ENCODE measurements at regions of chr20 and their contacts with region 1.

Region 1: DNA sequence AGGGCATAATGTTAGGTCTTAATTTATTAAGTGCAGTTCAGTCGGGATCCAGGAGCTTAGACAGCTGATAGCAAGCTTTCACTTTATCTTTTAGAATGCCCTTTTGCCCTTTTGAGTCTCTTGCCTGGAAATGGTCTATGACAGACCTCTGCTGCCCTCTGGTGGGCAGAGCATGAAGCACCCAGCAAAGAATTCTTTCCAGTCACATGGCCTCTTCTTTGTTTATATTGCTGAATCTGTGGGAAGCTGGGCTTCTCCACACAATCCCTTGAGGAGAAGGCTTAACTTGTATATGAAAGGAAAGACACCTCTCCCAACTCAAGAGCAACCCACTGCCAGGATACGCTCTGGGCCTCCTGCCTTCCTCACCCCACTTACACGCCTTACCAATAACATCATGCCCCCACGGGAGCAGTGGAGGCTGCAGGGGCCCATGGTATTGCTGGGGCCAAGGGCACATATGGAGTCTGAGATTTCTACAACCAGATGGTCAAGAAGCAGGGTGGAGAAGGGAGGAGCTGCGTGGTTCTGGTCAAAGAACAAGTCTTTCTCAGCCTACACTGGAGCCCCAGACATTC is 20.4 kb downstream of the WFDC3 start:
- DNase-seq: peak; percentile 80 to 91
- H3K4me3 ChIP-seq: no peak overlapping the region
- H3K27ac ChIP-seq: no peak overlapping the region
- H3K4me1 ChIP-seq: peaks cover 2 to 7% (median 5%) of the 10 kb centered on the region in 4 experiments
- H3K27me3 ChIP-seq: no peaks in the 10 kb centered on the region
- CTCF ChIP-seq: peak; percentile 61 to 94 (median 93)
- EP300 ChIP-seq: no peak
- POLR2A ChIP-seq: no peak
- RAD21 ChIP-seq: peak; percentile 99

Region 2: DNA sequence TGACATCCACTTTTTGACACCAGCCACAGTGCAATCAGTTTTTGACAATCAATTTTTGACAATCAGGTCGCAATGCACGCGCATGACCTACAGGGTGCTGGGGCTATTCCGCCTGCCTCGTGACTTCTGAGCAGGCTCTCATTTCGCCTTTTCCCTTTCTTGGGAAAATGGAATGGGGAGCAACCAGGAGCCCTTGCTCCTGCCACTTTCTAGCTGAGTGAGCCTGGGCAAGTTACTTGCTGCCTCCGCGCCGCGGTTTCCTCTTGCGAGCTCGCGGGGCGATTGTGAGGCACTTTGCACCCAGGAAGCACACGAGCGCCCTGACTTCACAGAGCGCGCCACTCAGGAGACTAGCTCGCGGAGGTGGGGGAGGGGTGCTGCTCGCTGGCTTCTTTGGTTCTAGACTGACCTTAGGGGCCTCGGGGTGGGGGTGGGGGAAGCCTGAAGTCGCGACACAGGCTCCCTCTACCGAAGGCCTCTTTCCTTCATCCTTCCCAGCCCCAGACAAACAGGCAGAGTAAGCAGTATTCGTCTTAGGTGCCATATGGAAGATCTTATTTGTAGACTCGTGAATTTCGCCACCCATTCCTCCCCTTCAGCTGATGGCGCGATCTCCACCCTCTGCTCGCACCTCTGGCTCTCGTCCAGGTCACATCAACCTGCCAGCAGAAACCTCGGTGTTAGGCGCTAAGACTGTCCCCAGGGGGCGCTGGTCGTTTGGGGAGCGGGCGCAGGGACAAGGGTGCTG is 397.7 kb before region 1 on chr20:
- CTCF ChIA-PET with region 1: interaction called, 18 read pairs
- POLR2A ChIA-PET with region 1: no interaction called
- DNase-seq: peak; percentile 70 to 96
- H3K4me3 ChIP-seq: peak overlapping the region; percentile 27 to 63 (median 45); a peak in 7 of 8 replicates
- H3K27ac ChIP-seq: no peak overlapping the region
- H3K4me1 ChIP-seq: peaks cover 0 to 16% (median 9%) of the 10 kb centered on the region in 4 experiments; a peak in 6 of 7 replicates
- H3K27me3 ChIP-seq: peaks cover 0 to 12% (median 9%) of the 10 kb centered on the region in 4 experiments; a peak in 3 of 7 replicates
- CTCF ChIP-seq: peak; percentile 88 to 96 (median 92)
- EP300 ChIP-seq: no peak
- POLR2A ChIP-seq: no peak
- RAD21 ChIP-seq: peak; percentile 77 to 85

Region 3: GRCh38 chr20:45470262-45470931 is 300.9 kb before region 1 on chr20:
- CTCF ChIA-PET with region 1: interaction called, 10 read pairs
- POLR2A ChIA-PET with region 1: interaction called, 3 read pairs
- DNase-seq: peak in 1 of 2 experiments; percentile 87
- H3K4me3 ChIP-seq: peak overlapping the region; percentile 63 to 77 (median 70)
- H3K27ac ChIP-seq: peak overlapping the region; percentile 36; the same call in 1 of the 2 replicates
- H3K4me1 ChIP-seq: peaks cover 2 to 20% (median 7%) of the 10 kb centered on the region in 4 experiments
- H3K27me3 ChIP-seq: peaks cover 0 to 4% (median 1%) of the 10 kb centered on the region in 4 experiments; a peak in 3 of 7 replicates
- CTCF ChIP-seq: no peak
- EP300 ChIP-seq: no peak
- POLR2A ChIP-seq: peak in 1 of 2 experiments; percentile 67; a peak in 1 of 3 replicates
- RAD21 ChIP-seq: no peak

Region 4: GRCh38 chr20:45545754-45546453 is 225.4 kb before region 1 on chr20:
- CTCF ChIA-PET with region 1: interaction called, 73 read pairs
- POLR2A ChIA-PET with region 1: interaction called, 8 read pairs
- DNase-seq: peak in 1 of 2 experiments; percentile 47
- H3K4me3 ChIP-seq: no peak overlapping the region
- H3K27ac ChIP-seq: no peak overlapping the region
- H3K4me1 ChIP-seq: peaks cover 0 to 5% (median 0%) of the 10 kb centered on the region in 4 experiments; a peak in 1 of 7 replicates
- H3K27me3 ChIP-seq: no peaks in the 10 kb centered on the region
- CTCF ChIP-seq: peak in 2 of 3 experiments; percentile 62 to 63; a peak in 3 of 4 replicates
- EP300 ChIP-seq: no peak
- POLR2A ChIP-seq: no peak
- RAD21 ChIP-seq: peak; percentile 90 to 93

Region 5: DNA sequence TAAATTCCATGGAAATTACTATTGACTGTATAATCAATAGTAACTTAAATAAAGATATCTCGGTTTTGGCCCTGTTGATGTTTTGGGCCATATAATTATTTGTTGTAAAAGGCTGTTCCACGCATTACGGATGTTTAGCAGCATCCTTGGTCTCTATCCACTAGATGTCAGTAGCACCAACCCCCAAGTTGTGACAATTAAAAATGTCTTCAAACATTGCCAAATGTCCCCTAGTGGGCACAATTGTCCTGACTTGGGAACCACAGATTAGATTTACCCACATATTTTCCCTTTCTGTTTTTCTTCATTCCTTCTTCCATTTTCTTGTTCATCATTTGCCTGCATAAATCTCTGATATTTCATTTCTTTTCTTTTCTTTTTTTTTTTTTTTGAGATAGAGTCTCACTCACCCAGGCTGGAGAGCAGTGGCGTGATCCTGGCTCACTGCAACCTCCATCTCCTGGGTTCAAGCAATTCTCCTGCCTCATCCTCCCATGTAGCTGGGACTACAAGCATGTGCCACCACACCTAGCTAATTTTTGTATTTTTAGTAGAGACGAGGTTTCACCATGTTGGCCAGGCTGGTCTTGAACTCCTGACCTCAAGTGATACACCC is 178.6 kb before region 1 on chr20:
- CTCF ChIA-PET with region 1: interaction called, 48 read pairs
- POLR2A ChIA-PET with region 1: interaction called, 4 read pairs
- DNase-seq: no peak
- H3K4me3 ChIP-seq: no peak overlapping the region
- H3K27ac ChIP-seq: no peak overlapping the region
- H3K4me1 ChIP-seq: no peaks in the 10 kb centered on the region
- H3K27me3 ChIP-seq: no peaks in the 10 kb centered on the region; a peak in 1 of 7 replicates
- CTCF ChIP-seq: peak in 2 of 3 experiments; percentile 86 to 99; a peak in 3 of 4 replicates
- EP300 ChIP-seq: no peak
- POLR2A ChIP-seq: no peak
- RAD21 ChIP-seq: peak; percentile 83 to 85

Region 6: DNA sequence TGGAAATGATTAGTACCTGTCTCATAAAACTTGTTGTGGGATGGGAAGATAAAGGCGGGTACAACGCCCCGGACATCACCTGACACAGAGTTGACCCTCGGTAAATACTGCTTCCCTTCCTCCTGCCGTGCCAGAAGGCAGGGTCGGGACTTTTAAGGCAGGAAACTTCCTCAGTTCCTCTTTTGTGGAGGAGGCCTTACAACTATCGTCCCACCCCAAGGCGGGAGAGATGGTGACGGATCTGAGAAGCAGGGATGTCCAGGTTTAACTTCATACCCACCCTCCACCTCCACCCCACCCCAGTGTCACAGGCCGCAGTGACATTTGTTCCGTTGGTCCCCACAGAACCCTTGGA is 21.0 kb after region 1 on chr20:
- CTCF ChIA-PET with region 1: interaction called, 12 read pairs
- POLR2A ChIA-PET with region 1: interaction called, 3 read pairs
- DNase-seq: no peak
- H3K4me3 ChIP-seq: peak overlapping the region; percentile 84 to 98 (median 92)
- H3K27ac ChIP-seq: peak overlapping the region; percentile 53; the same call in 1 of the 2 replicates
- H3K4me1 ChIP-seq: peaks cover 0 to 3% (median under 1%) of the 10 kb centered on the region in 4 experiments; a peak in 4 of 7 replicates
- H3K27me3 ChIP-seq: no peaks in the 10 kb centered on the region
- CTCF ChIP-seq: no peak
- EP300 ChIP-seq: no peak
- POLR2A ChIP-seq: no peak
- RAD21 ChIP-seq: no peak

Region 7: DNA sequence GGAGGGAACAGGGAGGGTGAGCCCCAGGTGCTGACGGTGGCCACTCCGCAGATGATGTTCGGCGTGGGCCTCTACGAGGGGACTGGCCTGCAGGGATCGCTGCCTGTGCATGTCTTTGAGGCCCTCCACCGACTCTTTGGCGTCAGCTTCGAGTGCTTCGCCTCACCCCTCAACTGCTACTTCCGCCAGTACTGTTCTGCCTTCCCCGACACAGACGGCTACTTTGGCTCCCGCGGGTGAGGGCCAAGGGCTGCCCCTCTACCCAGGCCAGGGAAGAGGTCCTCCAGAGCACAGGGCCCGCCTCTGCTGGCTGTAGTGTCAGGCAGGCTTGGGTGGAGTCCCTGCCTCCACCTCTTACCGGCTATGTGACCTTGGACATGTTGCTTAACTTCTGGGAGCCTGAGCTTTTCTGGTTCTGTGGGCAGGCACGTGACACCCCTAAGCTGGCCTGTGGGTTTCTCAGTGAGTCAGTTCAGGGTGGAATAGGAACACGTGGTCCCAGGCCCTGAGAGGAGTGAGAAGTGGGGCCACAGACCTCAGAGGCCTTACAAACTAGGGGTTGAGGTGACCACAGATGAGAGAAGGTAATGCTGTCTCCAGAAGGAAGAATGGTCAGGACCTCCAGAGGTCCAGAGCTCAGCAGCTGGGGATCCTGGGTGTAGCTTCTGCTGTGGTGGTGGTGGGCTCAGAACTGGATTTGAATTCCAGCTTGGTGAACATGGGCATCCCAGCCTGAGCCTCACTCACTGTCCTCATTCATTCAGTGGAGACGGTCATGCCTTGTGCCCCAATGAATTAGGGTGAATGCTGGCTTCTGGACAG is 175.1 kb after region 1 on chr20:
- CTCF ChIA-PET with region 1: no interaction called
- POLR2A ChIA-PET with region 1: no interaction called
- DNase-seq: no peak
- H3K4me3 ChIP-seq: no peak overlapping the region
- H3K27ac ChIP-seq: no peak overlapping the region
- H3K4me1 ChIP-seq: no peaks in the 10 kb centered on the region
- H3K27me3 ChIP-seq: no peaks in the 10 kb centered on the region; a peak in 1 of 7 replicates
- CTCF ChIP-seq: no peak
- EP300 ChIP-seq: no peak
- POLR2A ChIP-seq: no peak
- RAD21 ChIP-seq: no peak